Heart left ventricle (tissue), 16 donors: ENCODE measurements at regions of chr15 and their contacts with region 1.

Region 1: DNA sequence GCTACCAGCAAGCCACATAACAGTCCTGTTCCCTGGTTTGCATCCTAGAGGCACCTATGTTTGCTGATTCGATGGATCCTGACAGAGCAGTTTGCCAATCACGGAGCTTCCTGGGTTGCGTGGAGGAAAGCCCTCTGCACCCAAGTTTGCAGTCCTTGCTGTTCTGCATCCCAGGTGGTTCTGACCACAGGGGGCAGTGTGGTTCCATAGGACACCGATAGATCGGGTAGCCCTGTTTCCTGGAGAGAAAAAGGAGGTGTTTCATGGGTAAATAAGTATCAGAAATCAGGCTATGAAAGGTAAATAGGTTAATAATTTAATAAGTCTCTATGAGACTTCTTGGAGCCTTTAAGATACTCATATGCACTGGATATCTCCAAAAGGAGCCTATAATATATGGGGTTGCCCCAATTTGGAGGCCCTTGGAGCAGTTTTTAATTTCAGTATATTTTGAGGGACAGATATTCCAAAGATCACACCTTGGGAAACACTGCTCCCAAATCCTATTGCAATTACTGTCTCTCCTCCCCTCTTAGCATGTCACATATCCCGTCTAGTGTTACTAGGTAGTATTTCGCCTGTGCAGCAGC is 194.6 kb upstream of the TPM1 start:
- DNase-seq: peak; percentile 64 to 84 (median 75)
- ATAC-seq: peak; percentile 35 to 80 (median 73)
- H3K4me3 ChIP-seq: no peak overlapping the region
- H3K27ac ChIP-seq: peak overlapping the region in 3 of 12 donors; percentile 3 to 58 (median 44)
- H3K4me1 ChIP-seq: peaks cover 0 to 48% (median 15%) of the 10 kb centered on the region in 12 donors
- H3K27me3 ChIP-seq: no peaks in the 10 kb centered on the region
- CTCF ChIP-seq: peak; percentile 71 to 84 (median 76)
- POLR2A ChIP-seq: no peak

Region 2: GRCh38 chr15:62896978-62897647 is 49.1 kb after region 1 on chr15:
- intact Hi-C with region 1: loop called in 1 of 10 experiments (anchors 5 kb)
- DNase-seq: peak; percentile 92 to 95 (median 94)
- ATAC-seq: peak; percentile 72 to 88 (median 85)
- H3K4me3 ChIP-seq: peak overlapping the region in 7 of 12 donors; percentile 6 to 34 (median 20)
- H3K27ac ChIP-seq: peak overlapping the region; percentile 78 to 97 (median 90)
- H3K4me1 ChIP-seq: peaks cover 3 to 73% (median 37%) of the 10 kb centered on the region in 12 donors
- H3K27me3 ChIP-seq: no peaks in the 10 kb centered on the region
- CTCF ChIP-seq: no peak
- POLR2A ChIP-seq: peak in 1 of 2 donors; percentile 17

Region 3: DNA sequence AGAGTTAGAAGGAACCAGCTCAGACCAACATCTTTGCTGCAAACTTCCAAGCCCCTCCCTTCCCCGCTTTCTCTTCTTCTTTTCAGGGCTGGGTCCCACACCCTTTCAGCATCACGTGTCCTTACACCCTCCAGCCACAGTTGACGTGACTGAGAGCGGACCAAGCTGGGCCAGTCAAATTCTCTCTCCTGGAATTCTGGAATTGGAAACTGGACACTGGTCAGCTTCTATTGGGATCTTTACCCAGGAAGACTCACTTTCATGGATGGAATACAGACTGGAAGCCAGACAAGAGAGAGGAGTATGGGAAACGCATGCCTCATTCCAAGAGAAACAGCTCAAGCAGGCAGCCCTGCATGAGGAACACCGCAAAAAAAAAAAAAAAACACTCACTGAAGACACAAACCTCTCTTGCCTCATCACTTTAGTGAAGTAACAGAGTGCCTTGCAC is 182.1 kb after region 1 on chr15:
- intact Hi-C with region 1: loop called in 1 of 10 experiments (anchors 10 kb)
- DNase-seq: peak in 2 of 5 donors; percentile 50 to 52
- ATAC-seq: peak; percentile 58 to 81 (median 76)
- H3K4me3 ChIP-seq: no peak overlapping the region
- H3K27ac ChIP-seq: peak overlapping the region in 1 of 12 donors; percentile 46
- H3K4me1 ChIP-seq: peaks cover 0 to 7% (median 0%) of the 10 kb centered on the region in 12 donors
- H3K27me3 ChIP-seq: no peaks in the 10 kb centered on the region
- CTCF ChIP-seq: no peak
- POLR2A ChIP-seq: no peak

Region 4: GRCh38 chr15:63048115-63048775 is 200.2 kb after region 1 on chr15:
- intact Hi-C with region 1: loop called in 9 of 10 experiments (anchors 2 to 5 kb)
- DNase-seq: peak; percentile 90 to 95 (median 91)
- ATAC-seq: peak; percentile 28 to 83 (median 62)
- H3K4me3 ChIP-seq: peak overlapping the region; percentile 62 to 95 (median 84)
- H3K27ac ChIP-seq: peak overlapping the region; percentile 91 to 99 (median 96)
- H3K4me1 ChIP-seq: peaks cover 0 to 85% (median 49%) of the 10 kb centered on the region in 12 donors
- H3K27me3 ChIP-seq: peaks cover 0 to 40% (median 0%) of the 10 kb centered on the region in 9 donors
- CTCF ChIP-seq: peak; percentile 79 to 98 (median 91)
- POLR2A ChIP-seq: peak; percentile 24 to 96

Region 5: DNA sequence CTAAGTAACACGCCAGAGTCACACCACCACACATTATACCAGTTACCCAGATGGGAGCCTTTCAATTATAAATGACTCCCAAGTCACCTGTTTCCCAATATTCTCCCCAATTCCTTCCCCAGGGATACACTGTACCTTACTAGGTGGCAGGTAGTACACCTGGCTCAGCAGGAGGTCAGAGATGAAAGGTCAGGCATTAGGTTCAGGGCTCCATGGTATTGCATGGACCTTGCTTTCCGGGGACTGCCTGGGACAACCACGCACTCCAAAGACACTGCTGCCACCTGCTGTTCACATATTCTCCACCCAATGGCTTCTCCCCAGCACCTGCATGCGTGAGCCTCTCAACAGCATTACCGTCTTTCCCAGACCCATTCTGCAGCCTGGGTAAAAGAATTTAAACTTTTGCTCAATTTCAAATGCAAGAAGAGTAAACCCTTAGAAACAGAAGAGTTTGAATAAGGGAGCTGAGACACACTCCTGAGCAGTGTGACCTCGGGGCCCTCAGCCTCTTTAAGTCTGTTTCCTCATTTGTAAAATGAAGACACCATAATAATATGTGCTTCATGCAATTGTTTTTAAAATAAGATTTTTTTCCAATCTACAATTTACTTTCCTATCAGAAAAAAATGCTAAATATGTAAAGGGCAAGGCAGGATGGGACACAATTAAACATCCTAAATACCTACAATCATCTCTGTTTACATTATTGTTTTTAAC is 245.7 kb after region 1 on chr15:
- intact Hi-C with region 1: loop called (anchors 1 to 5 kb)
- DNase-seq: peak; percentile 81 to 87 (median 83)
- ATAC-seq: peak; percentile 91 to 95 (median 92)
- H3K4me3 ChIP-seq: no peak overlapping the region
- H3K27ac ChIP-seq: peak overlapping the region in 6 of 12 donors; percentile 41 to 67 (median 49)
- H3K4me1 ChIP-seq: peaks cover 0 to 28% (median 17%) of the 10 kb centered on the region in 12 donors
- H3K27me3 ChIP-seq: no peaks in the 10 kb centered on the region
- CTCF ChIP-seq: peak; percentile 75 to 96 (median 88)
- POLR2A ChIP-seq: no peak